Gastrocnemius medialis (tissue), 4 donors: ENCODE measurements at regions of chr2 and their contacts with region 1.

Region 1: GRCh38 chr2:239249776-239250175 is 151.0 kb downstream of the HDAC4 start:
- DNase-seq: peak in 1 of 2 donors; percentile 52
- ATAC-seq: no peak
- H3K4me3 ChIP-seq: no peak overlapping the region
- H3K27ac ChIP-seq: peak overlapping the region; percentile 94 to 99 (median 98)
- H3K4me1 ChIP-seq: peaks cover 94 to 95% of the 10 kb centered on the region in 2 donors
- H3K27me3 ChIP-seq: no peaks in the 10 kb centered on the region
- CTCF ChIP-seq: no peak
- POLR2A ChIP-seq: peak; percentile 13 to 15

Region 2: DNA sequence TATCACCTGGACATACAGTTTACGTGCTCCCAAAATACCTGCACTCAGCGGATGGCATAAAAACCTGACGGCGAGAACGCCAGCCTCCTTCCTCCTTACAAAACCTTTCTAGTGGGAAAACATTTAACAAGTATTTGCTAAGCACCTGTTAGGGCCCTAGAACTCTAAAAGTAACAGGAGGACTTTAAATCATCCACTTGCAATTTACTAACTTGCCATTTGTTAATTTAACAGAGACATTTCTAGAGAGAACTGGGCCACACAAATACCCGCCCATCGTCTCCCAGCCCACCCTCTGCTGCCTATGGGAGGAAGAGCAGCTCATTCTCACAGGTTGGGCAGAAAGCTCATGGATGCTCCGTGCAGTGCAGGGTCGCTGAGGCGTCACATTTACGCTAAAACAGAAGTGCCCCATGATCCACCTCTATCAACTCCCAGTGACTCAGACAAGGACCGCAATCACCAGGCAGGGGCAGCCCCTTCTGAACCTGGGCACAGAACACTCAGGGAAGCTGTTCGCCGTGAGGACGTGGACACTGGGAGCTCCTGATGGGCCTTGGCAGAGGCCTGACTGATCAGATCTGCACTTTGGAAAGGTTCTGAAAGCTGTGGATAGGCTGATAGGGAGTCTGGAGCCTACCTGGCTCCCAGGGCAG is 44.1 kb after region 1 on chr2:
- in situ Hi-C with region 1: no loop called
- intact Hi-C with region 1: loop called (anchors 5 kb)
- DNase-seq: peak; percentile 26 to 37
- ATAC-seq: peak in 1 of 2 donors; percentile 6
- H3K4me3 ChIP-seq: no peak overlapping the region
- H3K27ac ChIP-seq: peak overlapping the region; percentile 94 to 99 (median 98)
- H3K4me1 ChIP-seq: peaks cover 92 to 96% of the 10 kb centered on the region in 2 donors
- H3K27me3 ChIP-seq: no peaks in the 10 kb centered on the region
- CTCF ChIP-seq: no peak
- POLR2A ChIP-seq: peak; percentile 34 to 59

Region 3: DNA sequence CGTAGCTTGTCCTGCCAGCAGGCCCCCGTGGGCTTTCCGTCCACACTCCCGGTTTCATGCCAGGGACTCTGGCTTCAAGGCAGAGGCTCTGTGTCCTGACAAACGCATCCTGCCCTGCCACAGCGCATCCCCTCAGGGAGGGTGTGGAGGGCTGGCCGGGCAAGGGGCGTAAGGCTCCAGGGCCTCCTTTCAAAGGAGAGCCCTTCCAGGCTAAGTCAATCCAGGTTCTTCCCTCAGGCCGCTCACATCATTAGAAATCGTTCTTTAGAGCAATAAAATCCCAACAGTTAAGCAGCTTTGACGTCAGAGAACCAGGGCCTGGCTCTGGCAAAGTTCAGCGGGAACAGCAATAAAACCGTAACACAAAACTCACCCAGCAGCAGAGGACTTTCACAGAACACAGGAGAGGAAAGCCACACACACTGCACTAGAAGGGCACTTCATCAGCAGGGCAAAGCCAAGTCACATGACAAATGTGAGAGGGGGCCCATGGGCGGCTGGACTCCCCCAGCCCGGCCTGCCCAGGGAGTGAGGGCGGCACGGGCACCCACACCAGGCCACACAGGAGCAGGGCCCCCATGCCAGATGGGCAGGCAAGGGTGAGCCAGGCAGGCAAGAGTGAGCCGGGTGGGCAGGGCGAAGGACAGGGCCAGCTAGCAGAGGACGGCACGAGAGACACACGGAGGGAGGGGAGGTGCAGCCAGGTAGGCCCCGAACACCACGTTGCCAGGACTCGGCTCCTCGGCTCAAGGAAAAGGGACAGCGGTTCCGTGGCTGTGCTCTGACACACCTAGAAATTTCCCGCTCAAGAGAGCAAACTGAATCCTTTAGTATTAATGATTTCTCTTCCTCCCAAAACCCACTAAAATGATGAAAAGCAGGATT is 99.0 kb after region 1 on chr2:
- in situ Hi-C with region 1: no loop called
- intact Hi-C with region 1: no loop called
- DNase-seq: peak in 1 of 2 donors; percentile 56
- ATAC-seq: peak; percentile 80
- H3K4me3 ChIP-seq: no peak overlapping the region
- H3K27ac ChIP-seq: peak overlapping the region; percentile 71 to 80 (median 74)
- H3K4me1 ChIP-seq: peaks cover 13 to 15% of the 10 kb centered on the region in 2 donors
- H3K27me3 ChIP-seq: no peaks in the 10 kb centered on the region
- CTCF ChIP-seq: no peak
- POLR2A ChIP-seq: peak in 1 of 2 donors; percentile 9

Region 4: GRCh38 chr2:239498981-239499634 is 249.3 kb after region 1 on chr2:
- in situ Hi-C with region 1: no loop called
- intact Hi-C with region 1: no loop called
- DNase-seq: peak; percentile 42 to 46
- ATAC-seq: peak; percentile 55 to 63
- H3K4me3 ChIP-seq: no peak overlapping the region
- H3K27ac ChIP-seq: no peak overlapping the region
- H3K4me1 ChIP-seq: no peaks in the 10 kb centered on the region
- H3K27me3 ChIP-seq: no peaks in the 10 kb centered on the region
- CTCF ChIP-seq: no peak
- POLR2A ChIP-seq: no peak